Activated CD8-positive, alpha-beta memory T cell treated with anti-CD3 and anti-CD28 coated beads, Interleukin-2, amount 10 ng/mL, durations not matched to agents 7 days and 5 days (primary cell): ENCODE measurements at regions of chr3 and their contacts with region 1.

Region 1: DNA sequence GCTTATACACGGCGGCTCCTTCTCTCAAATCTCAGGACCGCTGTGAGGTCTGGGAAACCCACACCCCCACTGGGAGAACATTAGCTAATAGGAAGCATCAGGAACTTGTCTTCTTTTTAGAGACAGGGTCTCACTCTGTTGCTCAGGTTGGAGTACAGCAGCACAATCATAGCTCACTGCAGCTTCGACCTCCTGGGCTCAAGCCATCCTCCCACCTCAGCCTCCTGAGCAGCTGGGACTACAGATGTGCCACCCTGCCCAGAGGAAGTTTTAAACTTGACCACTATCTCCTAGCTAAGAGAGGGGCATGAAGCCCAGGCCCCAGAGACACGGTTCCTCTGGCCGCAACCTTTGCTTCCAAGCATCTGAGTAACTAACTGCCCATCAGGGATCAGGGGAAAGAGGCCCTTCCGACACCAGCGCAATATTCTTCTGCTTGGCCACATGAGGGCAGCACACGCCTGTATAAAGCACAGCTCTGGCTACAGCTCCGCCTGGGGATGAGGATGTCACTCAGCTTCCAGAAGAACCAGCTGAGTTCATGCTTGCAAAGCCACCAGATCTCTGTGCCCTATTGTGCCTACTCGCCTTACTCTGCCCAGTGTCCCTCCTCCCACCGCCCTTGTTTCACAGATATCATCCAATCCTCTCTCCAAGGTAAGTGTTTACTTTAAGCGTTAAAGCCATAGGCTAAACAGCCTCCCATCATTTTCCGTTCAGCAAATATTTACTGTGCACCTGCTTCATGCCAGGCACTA is 57.5 kb upstream of the SLC6A11 start:
- DNase-seq: peak; percentile 66
- ATAC-seq: peak; percentile 75
- H3K4me3 Mint-ChIP-seq: no peak overlapping the region
- H3K27ac Mint-ChIP-seq: no peak overlapping the region
- H3K4me1 Mint-ChIP-seq: peaks cover 10% of the 10 kb centered on the region
- H3K27me3 Mint-ChIP-seq: peaks cover 34% of the 10 kb centered on the region

Region 2: GRCh38 chr3:10445561-10446175 is 312.8 kb before region 1 on chr3:
- CTCF ChIA-PET with region 1: no interaction called
- DNase-seq: no peak
- ATAC-seq: no peak
- H3K4me3 Mint-ChIP-seq: no peak overlapping the region
- H3K27ac Mint-ChIP-seq: no peak overlapping the region
- H3K4me1 Mint-ChIP-seq: no peaks in the 10 kb centered on the region
- H3K27me3 Mint-ChIP-seq: peaks cover 8% of the 10 kb centered on the region

Region 3: GRCh38 chr3:10771486-10772270 is 13.2 kb after region 1 on chr3:
- CTCF ChIA-PET with region 1: interaction called, 11 read pairs
- DNase-seq: peak; percentile 33
- ATAC-seq: no peak
- H3K4me3 Mint-ChIP-seq: no peak overlapping the region
- H3K27ac Mint-ChIP-seq: no peak overlapping the region
- H3K4me1 Mint-ChIP-seq: no peaks in the 10 kb centered on the region
- H3K27me3 Mint-ChIP-seq: peaks cover 3% of the 10 kb centered on the region

Region 4: DNA sequence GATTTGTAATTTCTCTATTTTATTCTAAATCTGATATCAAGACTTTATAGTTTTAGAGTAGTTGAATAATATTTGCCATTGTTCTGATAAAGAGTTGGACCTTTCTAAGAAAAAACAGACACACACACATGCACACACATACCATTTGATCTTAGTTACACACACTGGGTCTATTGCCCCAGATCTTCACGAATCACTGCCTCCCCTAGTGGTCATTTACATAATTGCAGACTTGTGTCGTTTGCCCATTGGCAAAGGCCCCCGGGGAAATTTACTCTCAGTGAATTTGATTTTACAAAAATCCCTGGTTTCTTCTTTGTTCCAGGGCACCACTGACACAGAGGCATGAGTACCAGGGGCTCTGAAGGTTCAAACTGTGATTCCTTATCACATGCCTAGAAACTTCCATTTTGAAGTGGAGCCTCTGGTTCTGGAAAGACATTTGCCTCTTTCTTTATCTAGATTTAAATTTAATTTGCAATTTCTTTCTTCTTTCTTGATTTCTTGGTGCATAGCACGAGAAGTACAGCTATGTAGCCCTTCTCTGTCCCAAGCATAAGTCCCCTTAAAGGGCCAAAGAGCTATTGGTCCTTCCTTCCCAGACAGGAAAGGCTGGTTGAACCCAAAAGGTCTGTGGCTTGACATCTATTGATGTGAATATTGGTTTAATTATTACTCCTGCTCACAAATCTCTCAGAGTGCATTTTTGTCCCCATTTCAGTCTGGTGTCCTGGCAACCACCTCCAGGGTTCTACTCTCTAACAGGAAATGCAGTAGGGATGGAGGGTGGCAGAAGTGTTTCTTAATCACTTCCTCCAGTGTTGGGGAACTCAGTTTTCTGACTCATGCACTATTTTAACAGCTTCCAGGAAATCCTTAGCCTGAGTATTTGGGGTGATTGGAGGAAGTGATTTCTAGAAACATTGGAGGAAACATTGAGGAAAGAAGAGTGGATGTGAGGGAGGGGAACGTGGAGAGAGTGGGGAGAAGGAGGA is 25.2 kb after region 1 on chr3:
- CTCF ChIA-PET with region 1: interaction called, 12 read pairs
- DNase-seq: peak; percentile 52
- ATAC-seq: no peak
- H3K4me3 Mint-ChIP-seq: no peak overlapping the region
- H3K27ac Mint-ChIP-seq: no peak overlapping the region
- H3K4me1 Mint-ChIP-seq: peaks cover 6% of the 10 kb centered on the region
- H3K27me3 Mint-ChIP-seq: peaks cover 19% of the 10 kb centered on the region